ENCODE measurements at regions of chr7 and their contacts with region 1.

Region 1: DNA sequence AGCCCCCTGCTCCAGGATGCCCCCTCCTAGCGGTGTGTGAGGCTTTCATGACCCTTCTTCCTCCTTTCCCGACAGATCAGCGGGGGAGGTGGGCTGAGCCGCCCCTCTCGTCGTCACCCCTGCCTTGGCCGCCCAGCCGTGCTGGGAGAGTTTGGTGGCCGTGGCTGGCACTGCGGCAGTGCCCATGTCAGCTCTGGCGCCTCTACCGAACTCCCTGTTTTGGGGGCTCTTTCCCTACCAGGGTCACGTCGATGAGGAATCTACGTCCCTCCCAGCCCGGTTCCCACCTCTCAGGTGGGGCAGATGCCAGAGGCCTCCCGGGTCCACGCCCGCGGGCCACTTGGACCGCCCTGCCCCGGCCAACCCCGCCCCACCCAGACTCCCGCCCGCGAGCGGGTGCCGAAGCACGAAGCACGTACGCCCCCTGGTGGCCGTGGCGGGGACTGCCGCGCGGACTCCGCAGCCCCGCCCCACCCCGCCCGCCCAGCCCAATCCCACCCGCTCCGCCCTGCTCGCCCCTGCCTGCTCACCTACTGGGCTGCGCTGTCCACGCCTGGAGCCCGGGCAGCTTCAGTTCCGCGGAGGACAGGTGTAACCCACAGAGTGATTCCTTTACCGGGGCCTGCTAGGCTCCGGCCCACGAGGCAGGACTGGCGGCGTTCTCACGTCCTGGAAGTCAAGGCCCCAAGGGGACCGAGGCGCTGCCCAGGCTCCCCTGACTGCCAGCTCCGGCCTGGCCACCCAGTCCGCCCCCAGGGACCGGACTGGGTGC is 127.1 kb downstream of the UBE2H start:
- DNase-seq: peak; percentile 66 to 97 (median 82)
- ATAC-seq: peak; percentile 95
- H3K4me3 ChIP-seq: peak overlapping the region; percentile 74
- H3K4me3 Mint-ChIP-seq: peak overlapping the region; percentile 80 to 97 (median 88)
- H3K27ac ChIP-seq: no peak overlapping the region
- H3K27ac Mint-ChIP-seq: peak overlapping the region in 7 of 9 donors; percentile 33 to 85 (median 71)
- H3K4me1 ChIP-seq: no peaks in the 10 kb centered on the region
- H3K4me1 Mint-ChIP-seq: peaks cover 12 to 25% (median 19%) of the 10 kb centered on the region in 7 donors
- H3K27me3 ChIP-seq: no peaks in the 10 kb centered on the region
- H3K27me3 Mint-ChIP-seq: peaks cover 0 to 8% (median 0%) of the 10 kb centered on the region in 5 donors

Region 2: DNA sequence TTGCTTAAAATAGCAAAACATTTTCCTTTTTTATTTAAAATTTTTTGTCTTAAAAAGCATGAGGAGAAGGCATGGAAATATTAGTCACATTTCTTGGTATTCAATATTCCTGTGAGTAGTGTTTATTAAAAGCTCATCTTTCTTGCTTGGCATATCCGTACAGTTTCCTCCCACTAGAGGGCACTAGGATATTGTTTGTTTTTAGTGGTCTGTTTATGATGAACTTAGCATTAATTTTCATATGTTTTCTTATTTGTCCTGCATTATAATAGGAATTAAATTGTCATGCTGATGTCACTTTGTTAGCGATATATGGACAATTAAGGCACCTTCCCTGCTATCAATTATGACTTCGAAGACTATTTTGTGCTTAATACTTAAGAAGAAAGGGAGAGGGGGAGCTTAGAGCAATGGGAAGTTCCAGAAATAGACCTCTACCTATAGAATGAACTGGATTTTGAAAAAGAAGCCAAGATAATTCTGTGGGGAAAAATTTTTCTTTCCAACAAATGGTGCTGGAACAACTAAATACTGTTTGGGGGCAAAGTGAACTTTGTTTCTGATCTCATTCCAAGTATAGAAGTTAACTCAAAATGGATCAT is 482.5 kb before region 1 on chr7:
- CTCF ChIA-PET with region 1: no interaction called
- POLR2A ChIA-PET with region 1: no interaction called
- intact Hi-C with region 1: loop called (anchors 1 to 2 kb)
- DNase-seq: peak in 7 of 9 donors; percentile 7 to 37 (median 22)
- ATAC-seq: peak; percentile 61
- H3K4me3 ChIP-seq: no peak overlapping the region
- H3K4me3 Mint-ChIP-seq: no peak overlapping the region
- H3K27ac ChIP-seq: no peak overlapping the region
- H3K27ac Mint-ChIP-seq: no peak overlapping the region
- H3K4me1 ChIP-seq: no peaks in the 10 kb centered on the region
- H3K4me1 Mint-ChIP-seq: peaks cover 6 to 35% (median 19%) of the 10 kb centered on the region in 7 donors
- H3K27me3 ChIP-seq: no peaks in the 10 kb centered on the region
- H3K27me3 Mint-ChIP-seq: no peaks in the 10 kb centered on the region

Region 3: DNA sequence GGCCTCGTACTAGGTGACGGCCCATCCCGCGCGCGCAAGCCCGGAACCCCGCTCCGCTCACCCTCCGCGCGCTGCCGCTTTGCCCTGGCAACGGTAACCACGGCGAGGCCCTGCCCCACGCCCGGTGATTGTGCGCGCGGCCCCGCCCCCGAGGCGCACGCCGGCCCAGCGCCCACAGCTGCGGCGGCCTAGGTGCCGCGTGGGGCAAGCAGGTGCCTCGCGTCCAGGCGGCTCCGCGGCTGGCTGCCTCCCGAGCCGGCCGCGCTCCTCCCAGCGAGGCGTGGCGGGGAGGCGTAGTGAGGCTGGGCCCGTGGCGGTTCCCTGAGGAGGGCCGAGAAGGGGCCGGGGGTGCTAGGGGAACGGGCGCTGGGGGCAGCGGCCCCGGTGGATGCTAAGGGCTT is 323.3 kb before region 1 on chr7 and contains the start of gene SMKR1:
- CTCF ChIA-PET with region 1: no interaction called
- POLR2A ChIA-PET with region 1: no interaction called
- intact Hi-C with region 1: loop called in 1 of 2 experiments (anchors 10 kb)
- DNase-seq: peak; percentile 86 to 94 (median 91)
- ATAC-seq: peak; percentile 98
- H3K4me3 ChIP-seq: peak within 1 kb of the TSS; percentile 64
- H3K4me3 Mint-ChIP-seq: peak within 1 kb of the TSS; percentile 75 to 91 (median 86)
- H3K27ac ChIP-seq: peak within 1 kb of the TSS; percentile 70
- H3K27ac Mint-ChIP-seq: peak within 1 kb of the TSS; percentile 70 to 93 (median 83)
- H3K4me1 ChIP-seq: peaks cover 4 to 7% of the 10 kb centered on the region in 2 donors
- H3K4me1 Mint-ChIP-seq: peaks cover 14 to 22% (median 16%) of the 10 kb centered on the region in 7 donors
- H3K27me3 ChIP-seq: no peaks in the 10 kb centered on the region
- H3K27me3 Mint-ChIP-seq: peaks cover 0 to 23% (median 0%) of the 10 kb centered on the region in 5 donors
- total RNA-seq, gene SMKR1: 1.1 to 2.5 (median 1.4) TPM

Region 4: DNA sequence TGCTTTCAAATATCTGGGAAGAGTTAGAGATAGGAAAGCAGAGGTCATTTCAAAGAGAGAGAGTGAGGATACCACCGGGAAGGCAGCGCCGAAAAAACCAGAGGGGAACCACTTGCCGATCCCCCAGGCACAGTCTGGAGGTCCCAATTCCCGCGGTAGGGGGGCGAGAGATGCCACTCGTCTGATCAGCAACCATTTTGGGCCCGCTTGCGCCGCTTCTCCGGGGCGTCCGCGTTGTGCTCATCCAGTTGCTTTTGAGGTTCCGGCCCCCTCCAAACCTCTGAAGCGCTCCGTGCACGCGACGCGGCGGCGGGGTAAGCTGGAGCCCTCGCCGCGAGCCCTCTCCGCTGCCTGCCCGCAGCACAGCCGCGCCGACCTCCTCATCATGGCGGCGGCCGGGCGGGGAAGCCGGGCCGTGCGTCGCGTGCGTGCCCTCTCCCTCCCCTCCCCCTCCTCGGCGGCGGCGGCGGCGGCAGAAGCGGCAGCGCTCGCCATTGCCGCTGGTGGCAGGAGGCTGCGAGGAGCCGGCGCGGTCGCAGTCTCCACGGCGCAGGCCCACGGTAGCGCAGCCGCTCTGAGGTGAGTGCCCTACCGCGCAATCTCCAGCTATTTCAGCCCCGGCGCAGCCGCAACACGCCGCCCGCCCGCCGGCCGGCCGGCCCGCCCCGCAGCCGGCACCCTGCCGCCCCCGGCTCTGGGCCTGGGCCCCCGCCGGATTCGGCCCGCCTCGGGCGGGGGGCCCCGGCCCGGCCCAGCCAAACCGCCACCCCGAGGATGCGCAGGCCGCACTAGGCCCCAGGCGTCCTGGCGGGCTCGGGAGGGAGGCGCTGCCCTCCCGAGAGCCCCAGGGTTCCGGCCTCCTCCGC is 214.2 kb before region 1 on chr7 and contains the start of gene NRF1:
- CTCF ChIA-PET with region 1: no interaction called
- POLR2A ChIA-PET with region 1: no interaction called
- intact Hi-C with region 1: loop called (anchors 1 kb)
- DNase-seq: peak; percentile 89 to 97 (median 94)
- ATAC-seq: peak; percentile 92
- H3K4me3 ChIP-seq: peak within 1 kb of the TSS; percentile 87
- H3K4me3 Mint-ChIP-seq: peak within 1 kb of the TSS; percentile 88 to 99 (median 96)
- H3K27ac ChIP-seq: peak within 1 kb of the TSS; percentile 82
- H3K27ac Mint-ChIP-seq: peak within 1 kb of the TSS; percentile 92 to 99 (median 96)
- H3K4me1 ChIP-seq: peaks cover 24 to 38% of the 10 kb centered on the region in 2 donors
- H3K4me1 Mint-ChIP-seq: peaks cover 37 to 79% (median 67%) of the 10 kb centered on the region in 7 donors
- H3K27me3 ChIP-seq: no peaks in the 10 kb centered on the region
- H3K27me3 Mint-ChIP-seq: no peaks in the 10 kb centered on the region
- total RNA-seq, gene NRF1: 25.8 to 49.3 (median 35.3) TPM

Region 5: GRCh38 chr7:129719980-129720732 is 105.5 kb before region 1 on chr7:
- CTCF ChIA-PET with region 1: no interaction called
- POLR2A ChIA-PET with region 1: no interaction called
- intact Hi-C with region 1: loop called in 1 of 2 experiments (anchors 10 kb)
- DNase-seq: no peak
- ATAC-seq: no peak
- H3K4me3 ChIP-seq: no peak overlapping the region
- H3K4me3 Mint-ChIP-seq: no peak overlapping the region
- H3K27ac ChIP-seq: no peak overlapping the region
- H3K27ac Mint-ChIP-seq: peak overlapping the region in 2 of 9 donors; percentile 32 to 53
- H3K4me1 ChIP-seq: no peaks in the 10 kb centered on the region
- H3K4me1 Mint-ChIP-seq: peaks cover 0 to 10% (median 0%) of the 10 kb centered on the region in 7 donors
- H3K27me3 ChIP-seq: no peaks in the 10 kb centered on the region
- H3K27me3 Mint-ChIP-seq: no peaks in the 10 kb centered on the region

Region 6: DNA sequence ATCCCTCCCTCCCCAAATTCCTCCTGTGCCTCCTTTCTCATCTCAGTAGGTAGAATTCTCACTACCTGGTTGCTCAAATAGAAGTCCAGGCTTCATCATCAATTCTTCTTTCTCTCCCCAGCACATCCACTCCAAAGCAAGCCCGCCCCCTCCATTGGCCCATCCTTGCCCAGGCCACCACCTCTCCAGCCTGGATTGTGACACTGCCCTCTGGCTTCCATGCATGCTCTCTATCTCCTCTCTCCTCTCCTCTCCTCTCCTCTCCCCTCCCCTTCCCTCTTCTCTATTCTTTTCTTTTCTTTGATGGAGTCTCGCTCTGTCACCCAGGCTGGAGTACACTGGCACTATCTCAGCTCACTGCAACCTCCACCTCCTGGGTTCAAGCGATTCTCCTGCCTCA is 17.8 kb before region 1 on chr7:
- CTCF ChIA-PET with region 1: no interaction called
- POLR2A ChIA-PET with region 1: no interaction called
- intact Hi-C with region 1: no loop called
- DNase-seq: no peak
- ATAC-seq: no peak
- H3K4me3 ChIP-seq: no peak overlapping the region
- H3K4me3 Mint-ChIP-seq: no peak overlapping the region
- H3K27ac ChIP-seq: no peak overlapping the region
- H3K27ac Mint-ChIP-seq: peak overlapping the region in 1 of 9 donors; percentile 41
- H3K4me1 ChIP-seq: no peaks in the 10 kb centered on the region
- H3K4me1 Mint-ChIP-seq: no peaks in the 10 kb centered on the region
- H3K27me3 ChIP-seq: no peaks in the 10 kb centered on the region
- H3K27me3 Mint-ChIP-seq: peaks cover 0 to 14% (median 5%) of the 10 kb centered on the region in 5 donors

Region 7: DNA sequence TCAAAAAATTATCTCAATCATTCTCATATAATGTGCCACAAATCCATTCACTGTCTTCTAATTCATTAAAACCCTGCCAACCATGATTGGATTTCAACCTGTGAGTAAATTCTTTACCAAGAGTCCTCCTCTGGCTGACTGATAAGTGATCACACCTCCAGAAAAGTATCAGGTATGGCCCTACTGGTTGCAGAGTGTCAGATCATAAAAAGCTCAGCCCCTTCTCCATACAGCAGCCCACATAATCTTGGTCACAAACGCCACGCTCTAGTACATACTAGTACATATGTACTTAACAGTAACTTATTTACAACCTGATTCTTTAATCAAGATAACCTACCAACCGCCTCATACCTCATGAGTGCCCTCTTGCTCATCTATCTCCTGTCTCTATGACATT is 100.9 kb after region 1 on chr7:
- CTCF ChIA-PET with region 1: no interaction called
- POLR2A ChIA-PET with region 1: no interaction called
- intact Hi-C with region 1: no loop called
- DNase-seq: no peak
- ATAC-seq: no peak
- H3K4me3 ChIP-seq: no peak overlapping the region
- H3K4me3 Mint-ChIP-seq: no peak overlapping the region
- H3K27ac ChIP-seq: no peak overlapping the region
- H3K27ac Mint-ChIP-seq: peak overlapping the region in 4 of 9 donors; percentile 14 to 71 (median 70)
- H3K4me1 ChIP-seq: peaks cover 0 to 10% of the 10 kb centered on the region in 2 donors
- H3K4me1 Mint-ChIP-seq: peaks cover 11 to 55% (median 39%) of the 10 kb centered on the region in 7 donors
- H3K27me3 ChIP-seq: no peaks in the 10 kb centered on the region
- H3K27me3 Mint-ChIP-seq: no peaks in the 10 kb centered on the region

Region 8: DNA sequence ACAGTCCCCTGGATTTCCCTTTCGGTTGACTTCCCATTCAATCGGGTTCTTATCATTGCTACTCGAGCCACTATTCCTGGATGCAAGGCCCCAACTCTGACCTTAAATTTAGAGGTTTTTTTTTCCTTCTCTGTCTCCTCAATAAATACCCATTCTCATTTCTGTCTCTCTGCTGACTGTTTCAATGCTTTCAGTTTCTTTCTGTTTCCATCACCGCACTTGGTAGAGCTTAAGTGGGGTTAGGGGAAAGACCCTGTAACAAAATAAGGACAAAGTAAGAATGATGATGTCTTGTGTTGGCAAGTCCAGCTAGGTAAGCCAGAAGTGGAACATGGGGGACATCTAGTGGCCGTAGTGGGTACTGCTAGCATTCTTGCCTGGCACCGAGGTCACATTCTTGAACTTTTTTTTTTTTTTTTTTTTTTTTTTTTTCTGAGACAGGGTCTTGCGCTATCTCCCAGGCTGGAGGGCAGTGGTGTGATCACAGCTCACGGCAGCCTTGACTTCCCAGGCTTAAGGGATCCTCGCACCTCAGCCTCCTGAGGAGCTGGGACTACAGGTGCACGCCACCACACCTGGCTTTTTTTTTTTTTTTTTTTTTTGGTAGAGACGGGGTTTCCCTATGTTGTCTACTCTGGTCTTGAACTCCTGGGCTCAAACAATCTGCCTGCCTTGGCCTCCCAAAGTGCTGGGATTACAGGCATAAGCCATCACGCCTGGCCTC is 185.2 kb after region 1 on chr7:
- CTCF ChIA-PET with region 1: interaction called, 12 read pairs
- POLR2A ChIA-PET with region 1: no interaction called
- intact Hi-C with region 1: loop called (anchors 1 kb)
- DNase-seq: peak; percentile 71 to 88 (median 81)
- ATAC-seq: peak; percentile 88
- H3K4me3 ChIP-seq: no peak overlapping the region
- H3K4me3 Mint-ChIP-seq: no peak overlapping the region
- H3K27ac ChIP-seq: no peak overlapping the region
- H3K27ac Mint-ChIP-seq: peak overlapping the region in 2 of 9 donors; percentile 81 to 88
- H3K4me1 ChIP-seq: no peaks in the 10 kb centered on the region
- H3K4me1 Mint-ChIP-seq: peaks cover 0 to 9% (median 1%) of the 10 kb centered on the region in 7 donors
- H3K27me3 ChIP-seq: no peaks in the 10 kb centered on the region
- H3K27me3 Mint-ChIP-seq: no peaks in the 10 kb centered on the region

Measured in naive thymus-derived CD4-positive, alpha-beta T cell (primary cell).